K562 (cell line): ENCODE measurements at regions of chr11 and their contacts with region 1.

Region 1: GRCh38 chr11:57567515-57568329 is at the start of gene UBE2L6:
- DNase-seq: peak; percentile 69 to 85 (median 82)
- ATAC-seq: peak; percentile 91
- H3K4me3 ChIP-seq: peak within 1 kb of the TSS; percentile 78
- H3K27ac ChIP-seq: peak within 1 kb of the TSS; percentile 60; the same call in 2 of the 3 replicates
- H3K4me1 ChIP-seq: peaks cover 12 to 19% of the 10 kb centered on the region in 2 experiments; a peak in 4 of 5 replicates
- H3K27me3 ChIP-seq: no peaks in the 10 kb centered on the region
- CTCF ChIP-seq: peak in 2 of 3 experiments; percentile 45 to 59; a peak in 4 of 6 replicates
- EP300 ChIP-seq: no peak
- POLR2A ChIP-seq: no peak
- RAD21 ChIP-seq: peak in 1 of 2 experiments; percentile 81; a peak in 2 of 4 replicates
- polyA plus RNA-seq, gene UBE2L6: 21.5 to 24.9 TPM

Region 2: DNA sequence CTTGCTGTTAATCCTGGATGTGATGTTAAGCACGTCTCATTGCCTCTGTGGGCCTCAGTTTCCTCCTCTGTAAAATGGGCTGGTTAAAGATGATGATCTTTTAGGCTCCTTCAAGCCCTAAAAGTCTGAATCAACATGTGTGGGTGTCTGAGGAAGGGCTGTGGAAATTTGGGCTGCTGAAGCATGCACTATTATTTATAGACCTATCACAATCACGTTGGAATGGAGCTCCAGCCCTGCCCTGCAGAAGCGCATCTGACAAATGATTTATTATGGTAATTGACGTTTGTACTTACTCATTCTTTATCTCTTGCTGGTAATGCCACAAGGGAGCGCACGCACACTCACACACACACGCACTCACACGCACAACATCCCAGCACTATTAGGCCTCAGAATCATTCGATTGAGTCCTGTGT is 209.2 kb before region 1 on chr11:
- CTCF ChIA-PET with region 1: no interaction called
- POLR2A ChIA-PET with region 1: no interaction called
- in situ Hi-C with region 1: no loop called
- intact Hi-C with region 1: loop called (anchors 2 kb)
- DNase-seq: peak in 1 of 4 experiments; percentile 44
- ATAC-seq: peak; percentile 37
- H3K4me3 ChIP-seq: no peak overlapping the region
- H3K27ac ChIP-seq: no peak overlapping the region
- H3K4me1 ChIP-seq: peaks cover 17 to 29% of the 10 kb centered on the region in 2 experiments
- H3K27me3 ChIP-seq: no peaks in the 10 kb centered on the region
- CTCF ChIP-seq: peak in 1 of 3 experiments; percentile 45; a peak in 2 of 6 replicates
- EP300 ChIP-seq: peak; percentile 41; the same call in 1 of the 2 replicates
- POLR2A ChIP-seq: no peak
- RAD21 ChIP-seq: peak; percentile 36 to 40

Region 3: GRCh38 chr11:57474017-57474802 is 93.5 kb before region 1 on chr11:
- CTCF ChIA-PET with region 1: no interaction called
- POLR2A ChIA-PET with region 1: no interaction called
- in situ Hi-C with region 1: no loop called
- intact Hi-C with region 1: no loop called
- DNase-seq: peak; percentile 34 to 42 (median 36)
- ATAC-seq: peak; percentile 45
- H3K4me3 ChIP-seq: no peak overlapping the region
- H3K27ac ChIP-seq: no peak overlapping the region
- H3K4me1 ChIP-seq: peaks cover 23 to 31% of the 10 kb centered on the region in 2 experiments
- H3K27me3 ChIP-seq: no peaks in the 10 kb centered on the region
- CTCF ChIP-seq: no peak
- EP300 ChIP-seq: no peak
- POLR2A ChIP-seq: no peak
- RAD21 ChIP-seq: no peak

Region 4: GRCh38 chr11:57619331-57619730 is 51.6 kb after region 1 on chr11:
- CTCF ChIA-PET with region 1: no interaction called
- POLR2A ChIA-PET with region 1: no interaction called
- in situ Hi-C with region 1: no loop called
- intact Hi-C with region 1: no loop called
- DNase-seq: peak in 2 of 4 experiments; percentile 50 to 51
- ATAC-seq: no peak
- H3K4me3 ChIP-seq: no peak overlapping the region
- H3K27ac ChIP-seq: no peak overlapping the region
- H3K4me1 ChIP-seq: no peaks in the 10 kb centered on the region
- H3K27me3 ChIP-seq: peaks cover 5 to 6% of the 10 kb centered on the region in 2 experiments; a peak in 3 of 5 replicates
- CTCF ChIP-seq: peak; percentile 40 to 48 (median 47); a peak in 5 of 6 replicates
- EP300 ChIP-seq: no peak
- POLR2A ChIP-seq: no peak
- RAD21 ChIP-seq: no peak

Region 5: GRCh38 chr11:57644748-57645688 is 77.3 kb after region 1 on chr11:
- CTCF ChIA-PET with region 1: interaction called, 37 read pairs
- POLR2A ChIA-PET with region 1: interaction called, 5 read pairs
- in situ Hi-C with region 1: loop called (anchors 5 kb)
- intact Hi-C with region 1: loop called (anchors 1 kb)
- DNase-seq: peak; percentile 83 to 87 (median 86)
- ATAC-seq: peak; percentile 84
- H3K4me3 ChIP-seq: no peak overlapping the region
- H3K27ac ChIP-seq: no peak overlapping the region
- H3K4me1 ChIP-seq: peaks cover 31 to 34% of the 10 kb centered on the region in 2 experiments
- H3K27me3 ChIP-seq: peaks cover 0 to 15% of the 10 kb centered on the region in 2 experiments; a peak in 2 of 5 replicates
- CTCF ChIP-seq: peak; percentile 80 to 85 (median 82)
- EP300 ChIP-seq: no peak
- POLR2A ChIP-seq: no peak
- RAD21 ChIP-seq: peak; percentile 62 to 70

Region 6: DNA sequence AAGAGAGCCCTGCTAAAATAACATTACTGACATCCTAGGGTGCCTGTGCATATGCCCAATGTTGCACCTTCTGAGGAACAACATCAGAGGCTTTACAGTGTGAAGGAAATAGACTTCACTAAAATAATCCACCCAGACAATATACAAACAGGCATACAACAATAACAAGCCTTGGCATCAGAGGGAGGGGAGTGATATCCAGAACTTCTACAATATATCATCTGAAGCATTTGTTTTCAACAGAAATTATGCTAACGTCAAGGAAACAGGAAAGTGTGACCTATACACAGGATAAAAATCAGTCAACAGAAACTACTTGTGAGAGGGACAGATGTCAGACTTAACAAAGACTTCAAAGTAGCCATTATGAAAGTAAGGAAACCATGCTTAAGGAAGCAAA is 275.2 kb after region 1 on chr11:
- CTCF ChIA-PET with region 1: no interaction called
- POLR2A ChIA-PET with region 1: no interaction called
- in situ Hi-C with region 1: no loop called
- intact Hi-C with region 1: no loop called
- DNase-seq: no peak
- ATAC-seq: no peak
- H3K4me3 ChIP-seq: no peak overlapping the region
- H3K27ac ChIP-seq: no peak overlapping the region
- H3K4me1 ChIP-seq: no peaks in the 10 kb centered on the region
- H3K27me3 ChIP-seq: no peaks in the 10 kb centered on the region; a peak in 1 of 5 replicates
- CTCF ChIP-seq: no peak
- EP300 ChIP-seq: no peak
- POLR2A ChIP-seq: no peak
- RAD21 ChIP-seq: no peak

Region 7: GRCh38 chr11:57888386-57888785 is 320.7 kb after region 1 on chr11:
- CTCF ChIA-PET with region 1: no interaction called
- POLR2A ChIA-PET with region 1: no interaction called
- in situ Hi-C with region 1: no loop called
- intact Hi-C with region 1: no loop called
- DNase-seq: no peak
- ATAC-seq: no peak
- H3K4me3 ChIP-seq: no peak overlapping the region
- H3K27ac ChIP-seq: no peak overlapping the region
- H3K4me1 ChIP-seq: no peaks in the 10 kb centered on the region
- H3K27me3 ChIP-seq: no peaks in the 10 kb centered on the region; a peak in 1 of 5 replicates
- CTCF ChIP-seq: no peak
- EP300 ChIP-seq: no peak
- POLR2A ChIP-seq: no peak
- RAD21 ChIP-seq: no peak